HepG2 (cell line): ENCODE measurements at regions of chr17 and their contacts with region 1.

Region 1: GRCh38 chr17:45161019-45161825 is 453 bp upstream of the HEXIM2 start:
- DNase-seq: peak; percentile 100
- ATAC-seq: peak; percentile 75
- H3K4me3 ChIP-seq: peak overlapping the region; percentile 74 to 93 (median 92)
- H3K27ac ChIP-seq: peak overlapping the region; percentile 98
- H3K4me1 ChIP-seq: peaks cover 59% of the 10 kb centered on the region
- H3K27me3 ChIP-seq: no peaks in the 10 kb centered on the region; a peak in 1 of 5 replicates
- CTCF ChIP-seq: no peak
- EP300 ChIP-seq: peak in 1 of 2 experiments; percentile 52; a peak in 3 of 4 replicates
- POLR2A ChIP-seq: peak; percentile 76 to 88
- RAD21 ChIP-seq: peak; percentile 6

Region 2: DNA sequence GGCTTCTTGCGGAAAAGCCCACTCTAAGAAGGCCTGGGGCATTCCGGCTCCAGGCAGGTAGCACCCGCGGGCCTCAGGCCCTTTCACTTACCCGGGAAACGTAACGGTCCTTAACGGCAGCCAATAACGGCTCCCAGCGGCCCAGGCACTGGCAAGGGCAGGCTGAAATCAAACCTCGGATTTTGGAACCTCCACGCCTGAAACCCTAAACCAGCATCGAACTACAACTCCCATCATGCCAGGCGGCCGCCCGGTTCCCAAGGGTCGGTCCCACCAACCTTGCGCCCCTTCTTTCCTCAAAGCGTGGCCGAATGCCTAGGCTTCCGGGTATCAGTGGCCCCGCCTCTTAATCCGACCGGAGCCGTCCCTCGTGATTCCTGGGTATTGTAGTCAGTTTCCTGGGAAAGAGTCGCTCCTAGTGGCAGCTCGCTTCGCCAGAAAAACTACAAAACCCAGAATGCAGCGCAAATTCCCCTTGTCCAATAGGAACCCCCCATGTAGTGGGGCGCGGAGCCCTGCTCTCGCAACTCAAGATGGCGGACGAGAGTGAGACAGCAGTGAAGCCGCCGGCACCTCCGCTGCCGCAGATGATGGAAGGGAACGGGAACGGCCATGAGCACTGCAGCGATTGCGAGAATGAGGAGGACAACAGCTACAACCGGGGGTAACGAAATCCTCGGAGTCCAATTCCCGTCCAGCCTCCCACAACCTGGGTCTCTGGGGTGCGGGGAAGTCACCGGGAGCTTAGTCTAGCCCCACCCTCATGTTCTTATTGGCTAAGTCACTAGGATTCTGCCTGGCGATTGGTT is 100.2 kb before region 1 on chr17 and contains the start of gene NMT1:
- CTCF ChIA-PET with region 1: no interaction called
- POLR2A ChIA-PET with region 1: interaction called, 11 read pairs
- in situ Hi-C with region 1: no loop called
- intact Hi-C with region 1: no loop called
- DNase-seq: peak; percentile 100
- ATAC-seq: peak; percentile 95
- H3K4me3 ChIP-seq: peak within 1 kb of the TSS; percentile 91 to 99 (median 97)
- H3K27ac ChIP-seq: peak within 1 kb of the TSS; percentile 94
- H3K4me1 ChIP-seq: peaks cover 48% of the 10 kb centered on the region
- H3K27me3 ChIP-seq: no peaks in the 10 kb centered on the region; a peak in 1 of 5 replicates
- CTCF ChIP-seq: peak; percentile 15; the same call in 1 of the 2 replicates
- EP300 ChIP-seq: peak in 1 of 2 experiments; percentile 40; a peak in 2 of 4 replicates
- POLR2A ChIP-seq: peak; percentile 91 to 96
- RAD21 ChIP-seq: no peak; the same call in none of the 2 replicates
- total RNA-seq, gene NMT1: 142 and 194 TPM in 2 replicates

Region 3: DNA sequence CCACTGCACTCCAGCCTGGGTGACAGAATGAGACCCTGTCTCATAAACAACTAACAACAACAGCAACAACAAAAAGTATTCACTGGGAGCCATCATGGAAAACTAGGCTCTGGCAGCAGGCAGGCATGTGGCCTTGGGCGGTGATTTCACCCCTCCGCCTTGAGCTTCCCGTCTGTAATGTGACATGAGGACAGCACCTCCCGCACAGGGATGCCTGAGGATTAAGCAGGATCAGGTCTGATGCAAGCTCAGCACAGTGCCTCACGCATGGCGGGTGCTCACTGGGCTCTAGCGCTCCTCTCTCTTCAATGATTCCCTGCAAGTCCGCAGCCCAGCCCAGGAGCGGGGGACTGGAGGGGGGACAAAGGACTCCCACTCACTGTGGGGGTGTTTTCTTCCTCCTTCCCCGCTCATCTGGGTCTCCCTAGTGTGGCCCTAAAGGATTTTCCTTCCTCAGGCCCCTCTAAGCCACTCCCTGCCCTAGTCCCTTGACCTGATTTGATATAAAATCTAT is 31.7 kb before region 1 on chr17:
- CTCF ChIA-PET with region 1: interaction called, 11 read pairs
- POLR2A ChIA-PET with region 1: interaction called, 26 read pairs
- in situ Hi-C with region 1: no loop called
- intact Hi-C with region 1: no loop called
- DNase-seq: peak; percentile 89
- ATAC-seq: peak; percentile 48
- H3K4me3 ChIP-seq: peak overlapping the region in 1 of 3 experiments; percentile 41; a peak in 2 of 6 replicates
- H3K27ac ChIP-seq: peak overlapping the region; percentile 63
- H3K4me1 ChIP-seq: peaks cover 70% of the 10 kb centered on the region
- H3K27me3 ChIP-seq: no peaks in the 10 kb centered on the region
- CTCF ChIP-seq: no peak
- EP300 ChIP-seq: peak in 1 of 2 experiments; percentile 24; a peak in 1 of 4 replicates
- POLR2A ChIP-seq: peak in 1 of 2 experiments; percentile 43; a peak in 1 of 4 replicates
- RAD21 ChIP-seq: no peak

Region 4: GRCh38 chr17:45184144-45184543 is 22.9 kb after region 1 on chr17:
- CTCF ChIA-PET with region 1: no interaction called
- POLR2A ChIA-PET with region 1: interaction called, 2,487 read pairs
- in situ Hi-C with region 1: no loop called
- intact Hi-C with region 1: no loop called
- DNase-seq: no peak
- ATAC-seq: no peak
- H3K4me3 ChIP-seq: no peak overlapping the region
- H3K27ac ChIP-seq: no peak overlapping the region
- H3K4me1 ChIP-seq: peaks cover 34% of the 10 kb centered on the region
- H3K27me3 ChIP-seq: no peaks in the 10 kb centered on the region
- CTCF ChIP-seq: no peak
- EP300 ChIP-seq: no peak
- POLR2A ChIP-seq: no peak
- RAD21 ChIP-seq: no peak

Region 5: GRCh38 chr17:45197555-45198334 is 36.5 kb after region 1 on chr17:
- CTCF ChIA-PET with region 1: interaction called, 39 read pairs
- POLR2A ChIA-PET with region 1: interaction called, 551 read pairs
- in situ Hi-C with region 1: no loop called
- intact Hi-C with region 1: loop called (anchors 2 kb)
- DNase-seq: peak; percentile 92
- ATAC-seq: peak; percentile 91
- H3K4me3 ChIP-seq: peak overlapping the region; percentile 33 to 63 (median 41); a peak in 5 of 6 replicates
- H3K27ac ChIP-seq: peak overlapping the region; percentile 39
- H3K4me1 ChIP-seq: peaks cover 71% of the 10 kb centered on the region
- H3K27me3 ChIP-seq: no peaks in the 10 kb centered on the region
- CTCF ChIP-seq: peak; percentile 100
- EP300 ChIP-seq: peak; percentile 7 to 69; a peak in 2 of 4 replicates
- POLR2A ChIP-seq: no peak
- RAD21 ChIP-seq: peak; percentile 100

Region 6: GRCh38 chr17:45317112-45317928 is 156.1 kb after region 1 on chr17:
- CTCF ChIA-PET with region 1: no interaction called
- POLR2A ChIA-PET with region 1: interaction called, 10 read pairs
- in situ Hi-C with region 1: no loop called
- intact Hi-C with region 1: no loop called
- DNase-seq: peak; percentile 100
- ATAC-seq: peak; percentile 88
- H3K4me3 ChIP-seq: peak overlapping the region; percentile 43 to 86 (median 67)
- H3K27ac ChIP-seq: peak overlapping the region; percentile 47
- H3K4me1 ChIP-seq: peaks cover 59% of the 10 kb centered on the region
- H3K27me3 ChIP-seq: peaks cover 2 to 36% of the 10 kb centered on the region in 2 experiments; a peak in 3 of 5 replicates
- CTCF ChIP-seq: peak; percentile 37
- EP300 ChIP-seq: no peak; a peak in 1 of 4 replicates
- POLR2A ChIP-seq: peak in 1 of 2 experiments; percentile 24; a peak in 1 of 4 replicates
- RAD21 ChIP-seq: 0 out of 2 replicates have a peak, but pooled peaks have one; percentile 28

Region 7: DNA sequence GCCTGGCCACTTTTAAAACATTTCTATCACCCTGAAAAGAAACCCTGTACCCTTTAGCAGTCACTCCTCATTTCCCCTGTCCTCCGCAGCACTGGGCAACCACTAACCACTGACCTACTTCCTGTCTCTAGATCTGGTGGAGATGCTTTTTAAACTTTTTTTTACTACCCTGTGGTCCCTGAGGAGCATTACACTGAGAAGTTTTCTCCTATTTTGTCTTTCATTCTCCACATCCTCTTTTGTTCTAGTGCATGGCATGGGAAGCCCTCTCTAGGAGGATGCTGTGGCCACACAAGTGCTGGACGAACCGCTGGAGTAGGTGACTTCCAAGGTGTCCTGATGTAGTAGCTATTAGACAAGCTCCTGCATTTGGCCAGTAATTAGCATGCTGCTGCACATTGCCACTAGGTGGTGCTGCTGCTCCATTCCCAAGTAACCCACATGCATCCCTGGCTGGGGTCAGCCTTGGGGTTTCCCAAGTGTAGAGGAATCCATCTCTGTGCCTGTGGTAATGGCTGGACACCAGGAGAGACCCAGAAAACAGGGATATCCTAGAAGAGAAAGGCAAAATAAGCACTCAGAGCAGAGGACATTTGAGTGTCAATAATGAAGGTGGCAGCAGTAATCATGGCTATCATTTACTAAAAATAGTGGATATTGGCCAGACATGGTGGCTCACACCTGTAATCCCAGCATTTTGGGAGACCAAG is 479.1 kb after region 1 on chr17:
- CTCF ChIA-PET with region 1: no interaction called
- POLR2A ChIA-PET with region 1: no interaction called
- in situ Hi-C with region 1: no loop called
- intact Hi-C with region 1: no loop called
- DNase-seq: peak; percentile 81
- ATAC-seq: peak; percentile 95
- H3K4me3 ChIP-seq: no peak overlapping the region
- H3K27ac ChIP-seq: no peak overlapping the region
- H3K4me1 ChIP-seq: no peaks in the 10 kb centered on the region
- H3K27me3 ChIP-seq: no peaks in the 10 kb centered on the region
- CTCF ChIP-seq: peak; percentile 98
- EP300 ChIP-seq: peak in 1 of 2 experiments; percentile 7; a peak in 1 of 4 replicates
- POLR2A ChIP-seq: no peak
- RAD21 ChIP-seq: peak; percentile 94